HepG2 (cell line): ENCODE measurements at regions of chr14 and their contacts with region 1.

Region 1: GRCh38 chr14:55354500-55354899 is 57.1 kb downstream of the ATG14 start:
- DNase-seq: peak; percentile 41
- ATAC-seq: peak; percentile 84
- H3K4me3 ChIP-seq: no peak overlapping the region
- H3K27ac ChIP-seq: no peak overlapping the region
- H3K4me1 ChIP-seq: peaks cover 16% of the 10 kb centered on the region
- H3K27me3 ChIP-seq: no peaks in the 10 kb centered on the region
- CTCF ChIP-seq: peak; percentile 64
- EP300 ChIP-seq: no peak
- POLR2A ChIP-seq: no peak
- RAD21 ChIP-seq: peak; percentile 57; the same call in 1 of the 2 replicates

Region 2: GRCh38 chr14:55201224-55202050 is 153.1 kb before region 1 on chr14:
- CTCF ChIA-PET with region 1: no interaction called
- POLR2A ChIA-PET with region 1: no interaction called
- in situ Hi-C with region 1: no loop called
- intact Hi-C with region 1: no loop called
- DNase-seq: peak; percentile 24
- ATAC-seq: peak; percentile 65
- H3K4me3 ChIP-seq: peak overlapping the region in 2 of 3 experiments; percentile 24 to 26; a peak in 3 of 6 replicates
- H3K27ac ChIP-seq: no peak overlapping the region
- H3K4me1 ChIP-seq: peaks cover 18% of the 10 kb centered on the region
- H3K27me3 ChIP-seq: no peaks in the 10 kb centered on the region
- CTCF ChIP-seq: no peak
- EP300 ChIP-seq: no peak
- POLR2A ChIP-seq: no peak
- RAD21 ChIP-seq: no peak

Region 3: GRCh38 chr14:55212634-55213033 is 141.9 kb before region 1 on chr14:
- CTCF ChIA-PET with region 1: no interaction called
- POLR2A ChIA-PET with region 1: no interaction called
- in situ Hi-C with region 1: no loop called
- intact Hi-C with region 1: loop called (anchors 5 kb)
- DNase-seq: no peak
- ATAC-seq: no peak
- H3K4me3 ChIP-seq: no peak overlapping the region
- H3K27ac ChIP-seq: no peak overlapping the region
- H3K4me1 ChIP-seq: peaks cover 4% of the 10 kb centered on the region
- H3K27me3 ChIP-seq: no peaks in the 10 kb centered on the region
- CTCF ChIP-seq: no peak
- EP300 ChIP-seq: no peak
- POLR2A ChIP-seq: no peak
- RAD21 ChIP-seq: no peak

Region 4: GRCh38 chr14:55245657-55246268 is 108.7 kb before region 1 on chr14:
- CTCF ChIA-PET with region 1: interaction called, 8 read pairs
- POLR2A ChIA-PET with region 1: no interaction called
- in situ Hi-C with region 1: no loop called
- intact Hi-C with region 1: loop called (anchors 1 kb)
- DNase-seq: peak; percentile 25
- ATAC-seq: peak; percentile 62
- H3K4me3 ChIP-seq: no peak overlapping the region
- H3K27ac ChIP-seq: no peak overlapping the region
- H3K4me1 ChIP-seq: no peaks in the 10 kb centered on the region
- H3K27me3 ChIP-seq: peaks cover 2 to 43% of the 10 kb centered on the region in 2 experiments; a peak in 3 of 5 replicates
- CTCF ChIP-seq: peak; percentile 58
- EP300 ChIP-seq: no peak
- POLR2A ChIP-seq: no peak
- RAD21 ChIP-seq: no peak